Stomach (tissue), 19 donors: ENCODE measurements at regions of chr22 and their contacts with region 1.

Region 1: DNA sequence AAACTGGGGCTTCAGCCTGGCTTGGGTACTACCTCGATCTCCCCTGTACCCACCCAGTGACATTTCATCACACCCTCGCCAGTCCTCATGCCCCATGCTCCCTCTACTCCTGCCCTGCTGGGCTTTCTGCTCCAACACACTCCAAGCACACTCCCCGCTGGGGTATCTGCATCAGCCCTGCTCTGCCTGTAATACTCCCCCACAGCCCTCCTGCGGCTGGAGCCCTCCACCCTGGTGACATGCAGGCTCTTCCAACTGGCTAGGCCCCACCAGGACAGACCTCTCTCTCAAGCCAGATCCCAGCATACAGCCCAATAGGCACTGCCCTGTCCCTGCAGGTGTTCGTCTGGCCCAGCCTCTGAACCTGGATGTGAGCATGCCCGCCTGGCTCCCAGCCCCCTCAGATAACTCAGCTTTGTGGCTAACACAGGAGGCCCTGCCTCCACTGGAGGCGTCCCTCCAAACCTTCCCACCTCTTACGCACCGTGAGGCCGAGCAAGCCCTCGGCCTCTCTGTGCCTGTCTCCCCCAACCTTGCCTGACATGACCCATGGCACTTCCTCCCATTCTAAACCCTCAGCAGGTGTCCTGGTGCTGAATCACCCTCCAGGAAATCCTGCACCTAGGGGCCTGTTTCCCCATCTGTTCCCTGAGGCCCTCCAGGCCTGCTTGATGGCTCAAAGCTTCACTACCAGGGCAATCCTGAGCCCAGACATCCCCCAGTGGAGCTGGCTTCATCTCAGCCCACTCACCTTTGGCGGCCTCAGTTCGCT is 33.5 kb upstream of the TXNRD2 start:
- DNase-seq: no peak
- H3K4me3 ChIP-seq: no peak overlapping the region
- H3K27ac ChIP-seq: peak overlapping the region in 2 of 5 donors; percentile 30 to 38
- H3K4me1 ChIP-seq: peaks cover 6 to 33% (median 23%) of the 10 kb centered on the region in 4 donors
- H3K27me3 ChIP-seq: no peaks in the 10 kb centered on the region
- CTCF ChIP-seq: no peak
- EP300 ChIP-seq: no peak
- POLR2A ChIP-seq: no peak

Region 2: DNA sequence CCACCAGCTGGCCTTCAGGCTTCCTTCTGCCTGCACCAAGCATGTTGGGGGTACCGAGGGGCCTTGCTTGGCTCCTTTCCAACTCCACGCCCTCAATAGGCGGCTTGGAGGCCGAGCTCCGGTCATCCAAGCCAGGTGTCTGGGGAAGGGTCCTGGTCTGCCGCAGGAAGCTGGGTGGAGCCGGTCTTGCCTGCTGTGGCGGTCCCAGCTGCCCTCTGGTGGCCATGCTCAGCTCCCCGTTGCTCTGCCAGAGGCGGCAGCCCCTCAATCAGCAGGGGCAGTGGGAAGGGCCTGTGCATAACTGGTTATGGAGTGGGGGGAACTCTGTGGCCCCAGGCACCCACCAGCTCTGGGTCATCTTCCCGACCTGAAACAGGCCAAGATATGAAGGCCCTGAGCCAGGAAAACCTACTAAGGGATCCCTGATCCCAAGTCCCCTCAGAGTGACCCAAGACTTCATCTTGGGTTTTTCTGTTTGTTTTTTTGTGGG is 38.3 kb after region 1 on chr22:
- intact Hi-C with region 1: loop called (anchors 5 kb)
- DNase-seq: peak; percentile 51 to 91
- H3K4me3 ChIP-seq: no peak overlapping the region
- H3K27ac ChIP-seq: no peak overlapping the region
- H3K4me1 ChIP-seq: peaks cover 4 to 47% (median 30%) of the 10 kb centered on the region in 4 donors
- H3K27me3 ChIP-seq: peaks cover 0 to 17% (median 5%) of the 10 kb centered on the region in 3 donors
- CTCF ChIP-seq: peak in 5 of 7 experiments; percentile 53 to 63 (median 59)
- EP300 ChIP-seq: no peak
- POLR2A ChIP-seq: no peak

Region 3: GRCh38 chr22:20219667-20220628 is 244.8 kb after region 1 on chr22:
- intact Hi-C with region 1: no loop called
- DNase-seq: no peak
- H3K4me3 ChIP-seq: no peak overlapping the region
- H3K27ac ChIP-seq: no peak overlapping the region
- H3K4me1 ChIP-seq: peaks cover 11 to 36% (median 27%) of the 10 kb centered on the region in 4 donors
- H3K27me3 ChIP-seq: peaks cover 0 to 4% (median 0%) of the 10 kb centered on the region in 3 donors
- CTCF ChIP-seq: no peak
- EP300 ChIP-seq: no peak
- POLR2A ChIP-seq: no peak